ENCODE measurements at regions of chr11 and their contacts with region 1.

Region 1: GRCh38 chr11:27698872-27699474 is 1.3 kb downstream of the BDNF start:
- DNase-seq: peak; percentile 89 to 91
- H3K4me3 ChIP-seq: peak overlapping the region; percentile 70
- H3K4me3 Mint-ChIP-seq: peak overlapping the region; percentile 90
- H3K27ac Mint-ChIP-seq: peak overlapping the region; percentile 74
- H3K4me1 ChIP-seq: peaks cover 17% of the 10 kb centered on the region
- H3K4me1 Mint-ChIP-seq: peaks cover 20% of the 10 kb centered on the region
- H3K27me3 ChIP-seq: no peaks in the 10 kb centered on the region
- H3K27me3 Mint-ChIP-seq: no peaks in the 10 kb centered on the region
- CTCF ChIP-seq: peak; percentile 87 to 97

Region 2: DNA sequence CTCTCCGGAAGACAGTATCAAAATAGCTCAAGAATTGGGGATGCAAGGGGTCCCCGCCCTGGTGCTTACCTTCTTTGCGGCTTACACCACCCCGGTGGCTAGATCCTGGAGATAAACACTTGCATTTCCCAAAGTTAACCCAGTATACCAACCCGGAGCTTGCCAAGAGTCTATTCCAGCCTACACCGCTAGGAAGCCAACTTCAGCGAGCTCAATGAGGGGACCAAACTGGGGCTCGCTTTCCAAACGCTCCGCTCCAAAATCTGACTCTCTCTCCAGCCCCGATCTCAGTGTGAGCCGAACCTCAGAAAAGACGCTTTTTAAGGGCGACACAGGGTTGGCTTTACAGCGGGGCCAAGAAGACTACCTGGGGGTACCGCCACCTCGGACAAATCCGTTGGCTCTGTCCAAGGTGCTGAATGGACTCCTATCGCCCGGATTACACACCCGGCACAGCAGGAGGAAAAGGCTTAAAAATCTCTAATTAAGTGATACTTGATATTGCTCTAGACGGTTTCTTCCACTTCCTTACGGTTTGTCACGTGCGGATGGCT is 21.4 kb after region 1 on chr11:
- CTCF ChIA-PET with region 1: interaction called, 69 read pairs
- POLR2A ChIA-PET with region 1: interaction called, 8 read pairs
- intact Hi-C with region 1: loop called (anchors 1 kb)
- DNase-seq: peak; percentile 41 to 60
- H3K4me3 ChIP-seq: no peak overlapping the region
- H3K4me3 Mint-ChIP-seq: peak overlapping the region; percentile 90
- H3K27ac Mint-ChIP-seq: no peak overlapping the region
- H3K4me1 ChIP-seq: peaks cover 5% of the 10 kb centered on the region; the same call in 1 of the 2 replicates
- H3K4me1 Mint-ChIP-seq: peaks cover 7% of the 10 kb centered on the region
- H3K27me3 ChIP-seq: no peaks in the 10 kb centered on the region
- H3K27me3 Mint-ChIP-seq: no peaks in the 10 kb centered on the region
- CTCF ChIP-seq: no peak

Region 3: DNA sequence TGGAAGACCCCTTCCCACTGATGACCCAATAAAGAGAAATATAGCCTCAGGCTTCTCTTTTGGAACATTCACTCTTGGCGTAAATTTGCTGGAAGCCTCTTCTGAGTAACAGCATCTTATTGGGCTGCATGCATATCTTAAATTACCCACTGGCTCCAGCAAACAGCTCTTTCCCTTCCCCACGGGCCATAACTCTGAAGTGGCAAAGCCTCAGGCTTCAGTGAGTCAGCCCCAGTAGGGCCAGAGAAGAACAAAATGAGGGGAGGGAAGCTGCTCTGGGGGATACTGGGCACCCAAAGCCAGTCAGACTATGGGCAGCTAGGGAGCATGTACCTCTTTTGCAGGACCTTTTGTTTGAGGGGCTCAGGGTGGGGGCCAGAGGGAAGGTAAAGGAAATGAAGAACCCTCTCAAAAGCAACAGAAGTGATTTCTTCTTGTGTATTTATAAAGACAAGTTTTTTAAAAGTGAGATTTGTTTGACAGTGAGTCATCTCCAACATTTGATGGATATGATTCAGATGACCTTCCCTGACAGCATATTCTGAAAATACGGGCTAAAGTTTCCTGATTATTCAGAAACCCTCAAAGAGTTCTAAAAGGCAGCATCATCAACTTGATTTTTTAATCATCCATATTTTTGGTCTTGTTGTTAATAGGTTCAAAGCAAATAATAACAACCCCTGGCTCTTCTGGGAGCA is 205.5 kb after region 1 on chr11:
- CTCF ChIA-PET with region 1: no interaction called
- POLR2A ChIA-PET with region 1: no interaction called
- intact Hi-C with region 1: no loop called
- DNase-seq: no peak
- H3K4me3 ChIP-seq: no peak overlapping the region
- H3K4me3 Mint-ChIP-seq: no peak overlapping the region
- H3K27ac Mint-ChIP-seq: no peak overlapping the region
- H3K4me1 ChIP-seq: no peaks in the 10 kb centered on the region; the same call in 1 of the 2 replicates
- H3K4me1 Mint-ChIP-seq: peaks cover 7% of the 10 kb centered on the region
- H3K27me3 ChIP-seq: no peaks in the 10 kb centered on the region
- H3K27me3 Mint-ChIP-seq: no peaks in the 10 kb centered on the region
- CTCF ChIP-seq: no peak

Region 4: DNA sequence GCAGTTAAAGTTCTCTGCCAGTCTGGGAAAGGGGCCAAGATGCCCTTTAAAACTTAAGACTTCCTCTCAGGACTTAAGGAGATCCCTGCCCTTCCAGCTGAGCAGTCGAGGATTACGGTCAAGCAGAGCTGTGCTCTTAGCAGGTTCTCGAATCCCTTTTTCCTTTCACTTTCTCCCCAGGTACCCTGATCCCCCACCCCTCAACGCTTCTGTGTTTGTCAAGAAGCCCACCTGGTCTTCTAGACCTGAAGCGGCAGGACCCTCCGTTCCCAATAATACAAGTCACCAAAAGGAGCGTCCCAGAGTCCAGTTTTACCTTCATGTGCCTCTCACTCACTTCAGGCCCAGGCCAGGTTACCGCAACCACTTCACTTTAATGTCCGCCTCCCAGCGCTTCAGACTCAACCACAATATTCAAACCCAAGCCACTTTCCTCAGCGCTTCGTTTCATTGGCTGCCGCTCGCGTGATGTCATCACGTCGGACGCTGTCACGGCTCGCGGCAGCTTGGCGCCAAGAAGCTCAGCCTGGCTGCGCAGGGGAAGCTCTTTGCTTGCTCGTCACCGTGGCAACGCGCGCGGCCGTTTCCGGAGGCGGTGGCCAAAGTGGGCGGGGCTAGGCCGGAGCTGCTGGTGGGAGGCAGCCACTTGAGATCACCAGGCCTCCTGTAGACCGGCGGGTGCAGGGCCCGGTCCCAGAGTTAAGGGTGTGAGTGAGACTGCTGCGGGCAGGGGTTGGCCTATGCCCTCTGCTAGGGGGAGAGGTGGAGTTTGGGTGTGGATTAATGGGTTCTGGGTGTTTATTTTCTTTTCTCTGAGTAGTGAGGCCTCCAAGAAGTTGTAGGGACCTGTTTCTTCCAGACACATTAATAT is 409.0 kb after region 1 on chr11 and contains the starts of genes KIF18A and METTL15:
- CTCF ChIA-PET with region 1: interaction called, 7 read pairs
- POLR2A ChIA-PET with region 1: interaction called, 9 read pairs
- intact Hi-C with region 1: loop called (anchors 1 kb)
- DNase-seq: peak; percentile 100
- H3K4me3 ChIP-seq: peak within 1 kb of the TSS; percentile 52
- H3K4me3 Mint-ChIP-seq: peak within 1 kb of the TSS; percentile 94
- H3K27ac Mint-ChIP-seq: peak within 1 kb of the TSS; percentile 98
- H3K4me1 ChIP-seq: peaks cover 14% of the 10 kb centered on the region; the same call in 1 of the 2 replicates
- H3K4me1 Mint-ChIP-seq: peaks cover 6% of the 10 kb centered on the region
- H3K27me3 ChIP-seq: no peaks in the 10 kb centered on the region
- H3K27me3 Mint-ChIP-seq: no peaks in the 10 kb centered on the region
- CTCF ChIP-seq: no peak
- total RNA-seq, gene KIF18A: 22.3 and 22.5 TPM in 2 replicates
- total RNA-seq, gene METTL15: 14.4 and 15.2 TPM in 2 replicates

Region 5: GRCh38 chr11:28697920-28698827 is 999.2 kb after region 1 on chr11:
- CTCF ChIA-PET with region 1: interaction called, 3 read pairs
- POLR2A ChIA-PET with region 1: no interaction called
- intact Hi-C with region 1: loop called (anchors 1 kb)
- DNase-seq: peak; percentile 63 to 77
- H3K4me3 ChIP-seq: no peak overlapping the region
- H3K4me3 Mint-ChIP-seq: no peak overlapping the region
- H3K27ac Mint-ChIP-seq: peak overlapping the region; percentile 7
- H3K4me1 ChIP-seq: peaks cover 3% of the 10 kb centered on the region; the same call in 1 of the 2 replicates
- H3K4me1 Mint-ChIP-seq: peaks cover 23% of the 10 kb centered on the region
- H3K27me3 ChIP-seq: no peaks in the 10 kb centered on the region
- H3K27me3 Mint-ChIP-seq: no peaks in the 10 kb centered on the region
- CTCF ChIP-seq: peak; percentile 84 to 90

Region 6: GRCh38 chr11:29005401-29005980 is 1306.5 kb after region 1 on chr11:
- CTCF ChIA-PET with region 1: no interaction called
- POLR2A ChIA-PET with region 1: no interaction called
- intact Hi-C with region 1: loop called (anchors 5 kb)
- DNase-seq: peak; percentile 17 to 26
- H3K4me3 ChIP-seq: no peak overlapping the region
- H3K4me3 Mint-ChIP-seq: no peak overlapping the region
- H3K27ac Mint-ChIP-seq: no peak overlapping the region
- H3K4me1 ChIP-seq: no peaks in the 10 kb centered on the region
- H3K4me1 Mint-ChIP-seq: no peaks in the 10 kb centered on the region
- H3K27me3 ChIP-seq: no peaks in the 10 kb centered on the region; the same call in 1 of the 2 replicates
- H3K27me3 Mint-ChIP-seq: no peaks in the 10 kb centered on the region
- CTCF ChIP-seq: peak in 1 of 2 experiments; percentile 7

Region 7: DNA sequence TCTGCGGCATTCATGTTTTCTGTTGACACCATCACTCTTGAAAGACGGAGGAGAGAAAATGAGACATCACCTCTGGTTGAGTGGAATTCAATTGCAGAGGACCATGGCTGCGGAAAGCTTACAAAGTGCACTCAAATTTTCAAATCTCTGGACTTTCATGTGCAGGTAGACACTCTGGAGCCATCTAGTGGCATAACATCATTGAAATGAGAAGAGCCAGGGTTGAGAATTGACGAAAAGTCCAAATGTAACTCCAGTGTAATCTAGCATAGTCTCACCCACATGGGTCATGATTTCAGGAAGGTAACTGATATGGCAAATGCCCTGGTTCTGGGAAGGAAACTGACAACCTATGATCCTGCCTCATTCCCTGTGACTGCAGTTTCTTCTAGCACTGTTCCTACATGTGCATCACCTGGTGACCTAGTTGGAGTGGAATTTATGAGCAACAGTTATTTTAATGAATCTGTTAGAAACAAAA is 1630.0 kb after region 1 on chr11:
- CTCF ChIA-PET with region 1: interaction called, 17 read pairs
- POLR2A ChIA-PET with region 1: no interaction called
- intact Hi-C with region 1: loop called (anchors 1 kb)
- DNase-seq: peak in 1 of 2 experiments; percentile 54
- H3K4me3 ChIP-seq: no peak overlapping the region
- H3K4me3 Mint-ChIP-seq: no peak overlapping the region
- H3K27ac Mint-ChIP-seq: no peak overlapping the region
- H3K4me1 ChIP-seq: peaks cover 13% of the 10 kb centered on the region
- H3K4me1 Mint-ChIP-seq: peaks cover 14% of the 10 kb centered on the region
- H3K27me3 ChIP-seq: no peaks in the 10 kb centered on the region
- H3K27me3 Mint-ChIP-seq: no peaks in the 10 kb centered on the region
- CTCF ChIP-seq: peak; percentile 70 to 78